Activated naive CD8-positive, alpha-beta T cell treated with anti-CD3 and anti-CD28 coated beads, Interleukin-2, amount 10 ng/mL, durations not matched to agents 7 days and 5 days (primary cell): ENCODE measurements at regions of chr5 and their contacts with region 1.

Region 1: GRCh38 chr5:172188033-172188892 is at the start of gene STK10:
- DNase-seq: peak; percentile 94
- ATAC-seq: peak; percentile 84
- H3K4me3 Mint-ChIP-seq: peak within 1 kb of the TSS; percentile 97
- H3K27ac Mint-ChIP-seq: peak within 1 kb of the TSS; percentile 94
- H3K4me1 Mint-ChIP-seq: peaks cover 29% of the 10 kb centered on the region
- H3K27me3 Mint-ChIP-seq: peaks cover 6% of the 10 kb centered on the region
- total RNA-seq, gene STK10: 319 to 320 TPM

Region 2: DNA sequence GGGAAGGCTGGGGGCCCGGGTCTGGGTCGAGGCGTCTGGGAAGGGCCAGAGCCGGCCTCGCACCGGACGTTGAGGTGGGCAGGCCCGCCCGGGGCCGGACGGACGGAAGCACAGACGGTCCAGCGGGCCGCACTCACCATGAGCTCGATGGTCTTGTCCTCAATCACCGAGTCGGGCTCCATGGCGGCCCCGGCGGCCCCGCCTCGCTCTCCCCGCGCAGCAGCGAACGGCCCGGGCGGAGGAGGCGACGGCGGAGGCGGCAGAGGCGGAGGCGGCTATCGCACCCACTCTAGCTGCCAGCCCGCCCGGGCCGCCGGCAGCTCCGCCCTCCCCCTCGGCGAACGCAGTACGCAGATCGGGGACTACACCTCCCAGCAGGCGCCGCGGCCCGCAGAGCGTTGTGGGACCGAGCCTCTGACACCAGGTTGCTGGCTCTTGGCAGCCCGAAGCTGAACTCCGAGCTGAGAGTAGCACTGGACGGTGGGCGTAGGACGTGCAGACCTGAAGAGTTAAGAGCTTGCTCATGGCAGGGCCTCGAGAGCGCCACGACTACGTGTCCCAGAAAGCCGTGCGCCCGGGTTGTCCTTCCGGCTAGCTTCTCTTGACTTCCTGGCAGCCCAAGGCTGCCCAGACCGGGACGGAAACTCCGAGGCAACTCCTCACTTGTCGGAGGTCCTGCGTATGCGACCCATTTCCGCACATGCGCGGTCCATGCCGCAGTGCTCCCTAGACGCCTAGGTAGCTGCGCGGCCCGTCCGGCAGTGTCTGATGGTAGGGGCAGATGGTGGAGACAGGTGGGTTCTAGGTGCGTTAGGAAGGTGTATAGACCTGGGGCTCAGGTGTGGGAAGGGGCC is 181.7 kb before region 1 on chr5 and contains the start of gene FBXW11:
- POLR2A ChIA-PET with region 1: interaction called, 20 read pairs
- DNase-seq: peak; percentile 93
- ATAC-seq: peak; percentile 90
- H3K4me3 Mint-ChIP-seq: peak within 1 kb of the TSS; percentile 86
- H3K27ac Mint-ChIP-seq: peak within 1 kb of the TSS; percentile 96
- H3K4me1 Mint-ChIP-seq: peaks cover 39% of the 10 kb centered on the region
- H3K27me3 Mint-ChIP-seq: no peaks in the 10 kb centered on the region
- total RNA-seq, gene FBXW11: 35.4 to 37.7 TPM

Region 3: DNA sequence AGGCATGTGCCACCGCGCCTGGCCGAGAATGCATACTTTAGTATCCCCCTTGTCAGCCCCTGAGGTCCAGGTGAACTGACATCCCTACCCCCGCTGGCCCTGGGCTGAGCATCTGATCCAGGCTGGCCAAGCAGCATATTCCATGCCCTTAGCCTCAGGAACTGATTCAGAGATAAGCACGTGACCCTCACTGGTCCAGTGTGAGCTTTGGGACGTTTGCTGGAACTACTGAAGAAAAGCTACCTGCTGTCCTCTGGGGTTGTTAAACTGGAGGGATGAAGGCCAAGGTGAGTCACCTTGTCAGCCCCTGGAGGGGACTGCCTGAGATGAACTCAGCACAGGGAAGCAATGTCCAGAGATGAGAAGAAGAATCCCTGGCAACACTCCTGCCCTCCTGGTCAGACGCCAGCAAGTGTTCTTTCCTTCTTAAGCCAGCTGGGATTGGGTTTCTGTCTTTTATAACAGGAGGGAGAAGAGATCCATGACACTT is 122.7 kb before region 1 on chr5:
- POLR2A ChIA-PET with region 1: interaction called, 14 read pairs
- DNase-seq: no peak
- ATAC-seq: no peak
- H3K4me3 Mint-ChIP-seq: no peak overlapping the region
- H3K27ac Mint-ChIP-seq: peak overlapping the region; percentile 74
- H3K4me1 Mint-ChIP-seq: peaks cover 47% of the 10 kb centered on the region
- H3K27me3 Mint-ChIP-seq: no peaks in the 10 kb centered on the region

Region 4: GRCh38 chr5:172106511-172107356 is 81.5 kb before region 1 on chr5:
- POLR2A ChIA-PET with region 1: interaction called, 156 read pairs
- DNase-seq: peak; percentile 76
- ATAC-seq: no peak
- H3K4me3 Mint-ChIP-seq: peak overlapping the region; percentile 50
- H3K27ac Mint-ChIP-seq: peak overlapping the region; percentile 80
- H3K4me1 Mint-ChIP-seq: peaks cover 50% of the 10 kb centered on the region
- H3K27me3 Mint-ChIP-seq: no peaks in the 10 kb centered on the region

Region 5: DNA sequence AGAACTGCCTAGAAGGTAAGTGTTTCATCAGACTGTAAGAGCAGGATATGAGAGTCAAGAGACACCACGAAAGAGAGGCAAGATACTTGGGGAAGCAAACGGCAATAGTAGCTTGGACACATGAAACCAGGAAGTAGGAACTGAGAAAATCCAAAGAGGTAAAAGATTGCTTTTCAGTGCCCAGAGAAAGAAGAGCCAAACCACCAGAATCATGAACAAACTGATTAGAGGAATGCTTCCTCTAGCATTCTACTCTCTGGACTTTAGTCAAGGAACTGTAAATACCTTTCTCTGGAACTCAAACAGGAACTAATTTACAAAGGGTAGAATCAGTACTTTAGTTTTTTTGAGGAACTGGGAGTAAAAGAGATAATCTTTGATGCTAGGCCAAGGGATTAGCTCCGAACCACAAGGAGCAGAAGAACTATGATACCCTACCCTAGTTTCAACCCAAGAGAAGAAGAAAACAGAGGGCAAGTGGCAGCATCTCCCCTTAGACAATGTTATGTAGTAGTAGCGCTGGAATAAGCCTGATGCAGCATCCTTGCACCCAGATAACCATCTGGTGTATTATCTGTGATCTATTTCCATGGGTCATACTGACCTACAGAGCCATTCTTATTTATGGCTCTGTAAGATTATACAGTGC is 47.0 kb after region 1 on chr5:
- POLR2A ChIA-PET with region 1: no interaction called
- DNase-seq: no peak
- ATAC-seq: no peak
- H3K4me3 Mint-ChIP-seq: no peak overlapping the region
- H3K27ac Mint-ChIP-seq: no peak overlapping the region
- H3K4me1 Mint-ChIP-seq: peaks cover 32% of the 10 kb centered on the region
- H3K27me3 Mint-ChIP-seq: no peaks in the 10 kb centered on the region